Aorta (tissue), 5 donors: ENCODE measurements at regions of chr12 and their contacts with region 1.

Region 1: GRCh38 chr12:71069311-71069710 is 88.5 kb downstream of the TSPAN8 start:
- DNase-seq: no peak
- ATAC-seq: no peak
- H3K4me3 ChIP-seq: no peak overlapping the region
- H3K27ac ChIP-seq: no peak overlapping the region
- H3K4me1 ChIP-seq: no peaks in the 10 kb centered on the region
- H3K27me3 ChIP-seq: no peaks in the 10 kb centered on the region

Region 2: DNA sequence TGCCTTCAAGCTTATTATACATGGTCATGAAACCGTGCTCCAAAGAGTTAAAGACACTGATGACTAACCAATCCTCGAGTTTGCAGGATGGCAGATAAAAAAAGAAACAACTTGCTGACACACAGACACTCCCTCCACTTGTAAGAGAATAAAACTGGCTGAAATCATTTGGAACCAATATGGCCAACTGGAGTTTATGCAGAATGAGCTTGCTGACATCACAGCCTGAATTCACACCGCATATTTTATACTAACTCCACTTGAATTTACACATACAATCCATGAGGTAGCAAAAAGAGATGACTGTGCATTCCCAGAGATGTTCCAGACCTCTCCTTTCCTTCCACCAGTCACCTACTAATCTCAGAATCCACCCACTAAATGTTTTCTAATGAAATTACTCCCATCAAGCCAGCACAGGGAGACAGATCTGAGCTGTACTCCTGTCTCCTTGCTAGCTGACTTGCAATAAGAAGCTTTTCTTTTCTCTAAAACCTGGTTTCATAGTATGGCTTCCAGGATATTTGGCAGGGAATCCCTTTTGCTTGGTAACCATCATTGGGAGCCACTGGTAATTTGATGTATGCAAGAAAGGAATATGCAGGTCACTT is 133.0 kb before region 1 on chr12:
- intact Hi-C with region 1: loop called in 1 of 2 experiments (anchors 10 kb)
- DNase-seq: no peak
- ATAC-seq: no peak
- H3K4me3 ChIP-seq: no peak overlapping the region
- H3K27ac ChIP-seq: no peak overlapping the region
- H3K4me1 ChIP-seq: no peaks in the 10 kb centered on the region
- H3K27me3 ChIP-seq: no peaks in the 10 kb centered on the region